Activated CD4-positive, alpha-beta memory T cell treated with anti-CD3 and anti-CD28 coated beads, Interleukin-2, amount 10 ng/mL, durations not matched to agents 7 days and 5 days (primary cell): ENCODE measurements at regions of chr15 and their contacts with region 1.

Region 1: DNA sequence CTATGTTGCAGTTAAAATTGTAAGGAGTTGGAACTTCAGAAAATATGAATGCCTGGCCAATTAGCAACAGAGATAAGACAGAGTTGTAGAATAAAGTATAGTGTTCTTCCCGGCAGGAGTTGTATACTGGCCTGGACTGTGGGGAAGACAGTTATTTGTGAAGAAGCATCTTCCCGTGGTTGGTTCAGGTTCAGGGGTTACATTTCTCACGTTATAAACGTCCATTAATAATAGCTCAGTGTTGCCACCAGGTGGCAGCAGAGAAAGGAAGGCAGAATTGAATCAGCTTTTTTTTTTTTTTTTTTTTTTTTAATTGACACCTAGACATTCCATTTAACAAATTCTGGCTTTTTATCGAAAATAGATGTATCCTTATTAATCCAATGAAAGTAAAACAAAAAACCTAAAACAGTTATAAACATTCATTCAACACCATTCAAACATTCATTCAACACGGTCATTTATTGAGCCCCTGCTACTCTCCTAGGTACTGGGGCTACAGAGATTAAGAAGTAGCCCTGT is 66.4 kb upstream of the NR2E3 start:
- DNase-seq: peak; percentile 61
- H3K4me3 Mint-ChIP-seq: no peak overlapping the region
- H3K27ac Mint-ChIP-seq: no peak overlapping the region
- H3K4me1 Mint-ChIP-seq: peaks cover 4% of the 10 kb centered on the region
- H3K27me3 Mint-ChIP-seq: peaks cover 24% of the 10 kb centered on the region

Region 2: DNA sequence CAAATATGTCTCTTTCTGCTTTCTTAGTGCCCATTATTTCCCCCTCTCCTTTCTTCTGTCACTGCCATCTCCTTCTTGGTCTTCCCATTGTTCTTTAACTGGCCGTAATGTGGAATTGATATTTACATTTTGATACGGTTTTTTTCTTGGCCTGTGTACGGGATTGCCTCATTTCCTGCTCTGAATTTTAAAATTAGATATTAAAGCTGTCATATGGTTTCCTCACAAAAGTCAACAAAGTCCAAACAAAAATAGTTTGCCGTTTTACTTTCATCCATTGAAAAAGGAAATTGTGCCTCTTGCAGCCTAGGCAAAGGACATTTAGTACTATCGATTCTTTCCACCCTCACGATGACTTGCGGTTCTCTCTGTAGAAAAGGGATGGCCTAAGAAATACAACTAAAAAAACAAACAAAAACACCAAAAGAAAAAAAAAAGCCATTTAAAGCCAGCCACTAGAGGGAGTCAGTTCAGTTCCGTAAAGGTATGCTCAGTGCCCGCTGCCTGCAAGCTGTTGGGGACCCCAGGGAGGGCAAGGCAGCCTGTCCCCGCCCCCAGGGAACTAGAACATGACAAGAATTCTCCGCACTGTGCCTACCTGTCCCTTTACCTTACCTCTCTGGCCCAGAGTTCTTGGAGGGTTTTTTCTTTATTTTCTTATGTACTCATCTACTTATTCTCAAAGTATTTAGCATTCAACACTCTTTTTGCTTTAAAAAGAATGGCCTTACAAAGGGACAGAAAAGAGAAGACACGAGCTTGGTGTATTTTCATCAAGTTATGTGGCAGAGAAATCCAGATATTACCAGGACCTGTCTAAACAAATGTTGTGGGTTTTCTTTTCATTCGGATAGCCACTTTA is 36.4 kb after region 1 on chr15:
- CTCF ChIA-PET with region 1: interaction called, 13 read pairs
- POLR2A ChIA-PET with region 1: interaction called, 3 read pairs
- DNase-seq: peak; percentile 44
- H3K4me3 Mint-ChIP-seq: no peak overlapping the region
- H3K27ac Mint-ChIP-seq: peak overlapping the region; percentile 53
- H3K4me1 Mint-ChIP-seq: peaks cover 22% of the 10 kb centered on the region
- H3K27me3 Mint-ChIP-seq: peaks cover 3% of the 10 kb centered on the region

Region 3: GRCh38 chr15:71800835-71801745 is 57.2 kb after region 1 on chr15:
- CTCF ChIA-PET with region 1: interaction called, 26 read pairs
- POLR2A ChIA-PET with region 1: no interaction called
- DNase-seq: peak; percentile 30
- H3K4me3 Mint-ChIP-seq: no peak overlapping the region
- H3K27ac Mint-ChIP-seq: no peak overlapping the region
- H3K4me1 Mint-ChIP-seq: no peaks in the 10 kb centered on the region
- H3K27me3 Mint-ChIP-seq: peaks cover 6% of the 10 kb centered on the region